Activated CD8-positive, alpha-beta T cell treated with anti-CD3 and anti-CD28 coated beads, Interleukin-2, amount 10 ng/mL, durations not matched to agents 7 days and 5 days (primary cell): ENCODE measurements at regions of chr11 and their contacts with region 1.

Region 1: DNA sequence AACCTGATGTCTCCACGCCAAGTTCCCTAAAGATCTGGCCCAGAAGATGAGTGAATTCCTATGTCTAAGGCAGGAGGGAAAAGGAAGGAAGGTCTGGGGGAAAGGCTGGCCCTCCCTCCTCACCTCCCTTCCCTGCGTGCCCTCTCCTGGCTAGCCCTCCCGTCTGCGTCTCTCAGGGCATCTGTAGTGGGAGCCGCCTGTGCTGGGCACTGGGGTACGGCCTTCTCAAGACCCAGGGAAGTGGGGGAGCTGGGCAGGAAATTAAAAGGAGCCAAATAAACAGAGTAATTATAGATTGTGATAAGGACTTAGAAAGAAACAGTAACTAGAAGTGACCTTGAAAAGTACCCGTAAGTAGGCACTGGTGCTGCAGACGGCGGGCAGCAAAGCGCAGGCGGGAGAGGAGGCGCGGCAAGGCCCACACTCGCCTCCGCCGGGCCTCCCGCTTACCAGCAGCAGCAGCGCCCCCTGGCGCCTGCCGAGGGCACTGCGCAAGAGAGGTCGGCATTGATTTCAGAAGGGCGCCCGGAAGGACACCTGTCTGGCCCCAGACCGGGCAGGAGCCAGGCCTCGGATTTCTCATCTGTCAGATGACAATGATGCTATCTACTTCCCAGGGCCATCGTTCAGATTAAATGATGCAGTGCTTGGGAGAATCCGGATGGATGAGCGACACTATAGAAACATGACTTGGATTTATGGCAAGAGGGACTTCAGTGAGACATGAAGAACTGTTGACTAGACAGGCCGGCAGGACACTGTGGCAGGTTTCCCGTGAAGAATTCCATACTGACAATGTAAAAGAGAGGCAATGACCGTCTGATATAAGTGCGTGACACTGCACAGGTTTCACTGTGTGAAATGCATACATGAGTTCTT is 7.3 kb downstream of the KCNJ1 start:
- DNase-seq: peak; percentile 82
- ATAC-seq: peak; percentile 92
- H3K4me3 Mint-ChIP-seq: no peak overlapping the region
- H3K27ac Mint-ChIP-seq: no peak overlapping the region
- H3K4me1 Mint-ChIP-seq: peaks cover 8% of the 10 kb centered on the region
- H3K27me3 Mint-ChIP-seq: peaks cover 18% of the 10 kb centered on the region

Region 2: GRCh38 chr11:128692753-128693415 is 166.9 kb before region 1 on chr11:
- CTCF ChIA-PET with region 1: no interaction called
- POLR2A ChIA-PET with region 1: no interaction called
- DNase-seq: peak; percentile 50
- ATAC-seq: peak; percentile 37
- H3K4me3 Mint-ChIP-seq: peak overlapping the region; percentile 93
- H3K27ac Mint-ChIP-seq: peak overlapping the region; percentile 94
- H3K4me1 Mint-ChIP-seq: peaks cover 49% of the 10 kb centered on the region
- H3K27me3 Mint-ChIP-seq: peaks cover 26% of the 10 kb centered on the region

Region 3: DNA sequence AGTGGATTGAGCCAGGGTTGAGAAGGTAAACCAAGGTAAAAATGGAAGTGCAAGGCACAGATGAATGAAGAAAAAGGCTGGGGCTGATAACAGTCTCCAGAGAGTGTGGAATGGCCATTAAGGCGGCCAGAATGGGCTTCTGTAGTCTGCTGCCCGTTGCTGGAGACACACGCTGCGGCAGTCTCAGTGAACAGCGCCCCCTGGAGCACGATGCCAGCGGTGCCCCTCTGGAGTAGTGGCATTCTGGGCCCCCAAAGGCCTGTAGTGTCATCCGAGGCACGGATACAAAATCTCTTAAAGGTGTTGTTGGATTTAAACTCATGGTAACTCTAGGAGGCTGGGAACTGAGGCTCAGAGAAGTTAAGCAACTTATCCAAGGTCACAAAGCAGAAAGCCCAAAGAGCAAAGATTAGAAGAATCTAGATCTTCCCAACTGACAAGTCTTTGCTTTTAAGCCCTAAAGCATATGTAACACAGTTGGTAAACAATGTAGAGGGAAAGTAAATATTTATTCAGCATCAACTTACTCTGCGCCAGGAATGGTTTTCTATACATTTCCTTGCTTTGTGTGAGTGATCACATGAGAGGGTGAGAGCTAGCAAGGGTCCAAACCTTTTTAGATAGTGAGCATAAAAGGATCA is 10.9 kb before region 1 on chr11:
- CTCF ChIA-PET with region 1: interaction called, 38 read pairs
- POLR2A ChIA-PET with region 1: no interaction called
- DNase-seq: peak; percentile 73
- ATAC-seq: peak; percentile 77
- H3K4me3 Mint-ChIP-seq: no peak overlapping the region
- H3K27ac Mint-ChIP-seq: no peak overlapping the region
- H3K4me1 Mint-ChIP-seq: peaks cover 23% of the 10 kb centered on the region
- H3K27me3 Mint-ChIP-seq: no peaks in the 10 kb centered on the region

Region 4: DNA sequence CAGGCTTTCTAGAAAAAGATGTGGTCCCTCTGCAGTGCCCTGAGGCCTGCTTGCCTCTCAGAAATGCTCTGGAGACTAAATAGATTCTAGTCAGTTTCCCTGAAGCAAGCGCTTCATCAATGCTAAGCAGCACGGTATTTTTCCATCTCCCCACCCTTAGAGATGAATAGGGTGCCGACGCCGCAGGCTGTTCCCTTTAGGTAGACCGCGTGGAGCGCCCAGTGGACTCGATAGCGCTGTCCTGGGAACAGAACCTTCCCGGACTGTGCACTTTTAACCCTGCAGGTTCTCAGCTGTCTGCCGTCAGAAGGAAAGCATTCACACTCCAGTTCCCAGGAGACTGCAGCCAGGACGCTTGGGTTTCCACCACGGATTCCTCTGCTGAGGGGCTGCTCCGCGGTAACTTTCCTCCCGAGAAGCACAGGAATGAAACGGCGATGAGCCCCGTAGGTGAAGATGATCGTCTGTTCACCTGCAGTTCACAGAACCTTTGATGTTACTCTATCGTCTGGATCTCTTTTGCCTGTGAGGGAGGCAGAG is 16.4 kb after region 1 on chr11:
- CTCF ChIA-PET with region 1: no interaction called
- POLR2A ChIA-PET with region 1: no interaction called
- DNase-seq: no peak
- ATAC-seq: no peak
- H3K4me3 Mint-ChIP-seq: no peak overlapping the region
- H3K27ac Mint-ChIP-seq: no peak overlapping the region
- H3K4me1 Mint-ChIP-seq: peaks cover 5% of the 10 kb centered on the region
- H3K27me3 Mint-ChIP-seq: peaks cover 20% of the 10 kb centered on the region